ENCODE measurements at regions of chr12 and their contacts with region 1.

Region 1: GRCh38 chr12:117486840-117487659 is 125.6 kb upstream of the NOS1 start:
- DNase-seq: peak; percentile 74 to 83
- ATAC-seq: peak; percentile 95 to 98 (median 96)
- H3K4me3 ChIP-seq: no peak overlapping the region
- H3K27ac ChIP-seq: peak overlapping the region; percentile 69
- H3K4me1 ChIP-seq: peaks cover 18% of the 10 kb centered on the region
- H3K27me3 ChIP-seq: no peaks in the 10 kb centered on the region
- CTCF ChIP-seq: no peak

Region 2: DNA sequence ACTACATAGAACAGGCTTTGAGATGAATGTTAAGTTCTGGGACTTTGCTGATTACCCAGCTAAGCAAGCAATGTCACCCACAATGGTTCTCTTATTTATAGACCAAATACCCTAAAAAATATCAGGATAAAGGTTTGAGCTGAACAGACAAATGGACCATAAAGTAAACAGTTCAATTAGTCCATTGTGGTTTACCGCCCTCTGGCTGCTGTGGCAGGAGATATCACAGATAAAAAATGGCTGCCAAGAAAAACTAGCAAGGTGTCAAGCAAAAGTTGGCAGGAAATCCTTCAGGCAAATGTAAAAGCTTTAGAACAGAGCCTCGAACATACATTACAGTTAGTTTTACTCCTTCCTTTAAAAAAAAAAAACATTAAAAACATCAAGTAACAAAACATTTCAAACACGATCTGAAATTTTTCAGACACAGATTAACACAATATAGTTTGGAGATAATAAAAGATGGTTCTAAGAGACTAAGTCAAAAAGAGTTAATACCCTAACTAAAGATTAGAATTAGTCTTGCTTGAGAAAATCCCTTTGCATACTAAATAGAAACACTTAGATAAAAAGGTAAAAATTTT is 1250.8 kb before region 1 on chr12:
- intact Hi-C with region 1: no loop called
- DNase-seq: peak in 1 of 2 donors; percentile 57
- ATAC-seq: peak in 3 of 4 donors; percentile 57 to 79 (median 76)
- H3K4me3 ChIP-seq: no peak overlapping the region
- H3K27ac ChIP-seq: no peak overlapping the region
- H3K4me1 ChIP-seq: peaks cover 53% of the 10 kb centered on the region
- H3K27me3 ChIP-seq: no peaks in the 10 kb centered on the region
- CTCF ChIP-seq: peak; percentile 67

Region 3: GRCh38 chr12:117331703-117332102 is 155.3 kb before region 1 on chr12:
- intact Hi-C with region 1: no loop called
- DNase-seq: no peak
- ATAC-seq: no peak
- H3K4me3 ChIP-seq: no peak overlapping the region
- H3K27ac ChIP-seq: no peak overlapping the region
- H3K4me1 ChIP-seq: peaks cover 20% of the 10 kb centered on the region
- H3K27me3 ChIP-seq: no peaks in the 10 kb centered on the region
- CTCF ChIP-seq: no peak

Region 4: GRCh38 chr12:117501076-117501869 is 14.2 kb after region 1 on chr12:
- intact Hi-C with region 1: no loop called
- DNase-seq: no peak
- ATAC-seq: peak; percentile 56 to 92 (median 84)
- H3K4me3 ChIP-seq: no peak overlapping the region
- H3K27ac ChIP-seq: no peak overlapping the region
- H3K4me1 ChIP-seq: peaks cover 4% of the 10 kb centered on the region
- H3K27me3 ChIP-seq: no peaks in the 10 kb centered on the region
- CTCF ChIP-seq: no peak

Region 5: GRCh38 chr12:117533704-117534103 is 46.7 kb after region 1 on chr12:
- intact Hi-C with region 1: loop called in 1 of 2 experiments (anchors 5 kb)
- DNase-seq: peak; percentile 43 to 85
- ATAC-seq: peak; percentile 92 to 97 (median 96)
- H3K4me3 ChIP-seq: no peak overlapping the region
- H3K27ac ChIP-seq: peak overlapping the region; percentile 69
- H3K4me1 ChIP-seq: peaks cover 13% of the 10 kb centered on the region
- H3K27me3 ChIP-seq: no peaks in the 10 kb centered on the region
- CTCF ChIP-seq: no peak